ENCODE measurements at regions of chr15 and their contacts with region 1.

Region 1: DNA sequence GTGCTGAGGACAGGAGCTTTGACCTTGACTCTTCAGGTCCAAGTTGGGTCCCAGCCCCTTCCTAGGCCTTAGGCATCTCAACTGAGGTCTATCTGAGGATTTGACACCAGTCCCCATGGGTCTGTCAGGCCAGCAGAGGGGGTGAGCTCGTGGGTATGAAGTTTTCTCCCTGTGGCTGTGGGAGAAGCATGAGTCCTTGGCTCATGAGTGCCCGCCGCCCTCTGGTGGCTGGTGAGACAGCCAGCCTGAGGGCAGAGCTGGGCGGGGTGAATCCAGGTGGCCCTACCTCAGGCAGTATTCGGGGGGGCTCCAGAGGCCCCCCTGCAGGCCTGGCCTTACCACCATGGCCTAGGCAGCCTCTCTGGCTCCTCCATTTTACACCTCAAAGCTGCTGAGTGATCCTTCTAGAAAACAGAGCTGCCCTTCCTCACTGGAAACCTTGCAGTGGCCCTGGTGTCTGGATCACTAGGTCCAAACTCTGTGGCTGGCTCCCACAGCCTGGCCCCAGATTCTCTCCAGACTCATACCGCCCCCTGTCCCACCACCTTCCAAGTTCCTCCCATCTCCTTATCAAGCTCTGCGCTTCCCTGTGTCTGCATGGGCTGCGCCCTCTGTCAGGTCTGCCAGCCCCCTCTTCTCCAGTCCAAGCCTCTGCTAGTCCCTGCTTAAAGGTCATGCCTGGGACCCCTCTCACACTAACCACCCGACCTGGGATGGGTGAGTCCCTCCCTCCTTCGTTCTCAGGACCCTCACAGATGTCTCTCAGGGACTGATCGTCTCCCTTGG is 16.1 kb downstream of the SH2D7 start:
- DNase-seq: peak; percentile 78 to 94 (median 83)
- ATAC-seq: peak; percentile 86
- H3K4me3 ChIP-seq: no peak overlapping the region
- H3K4me3 Mint-ChIP-seq: no peak overlapping the region
- H3K27ac ChIP-seq: no peak overlapping the region
- H3K27ac Mint-ChIP-seq: no peak overlapping the region
- H3K4me1 ChIP-seq: peaks cover 37% of the 10 kb centered on the region
- H3K4me1 Mint-ChIP-seq: peaks cover 35% of the 10 kb centered on the region
- H3K27me3 ChIP-seq: no peaks in the 10 kb centered on the region
- H3K27me3 Mint-ChIP-seq: no peaks in the 10 kb centered on the region
- CTCF ChIP-seq: peak; percentile 88

Region 2: DNA sequence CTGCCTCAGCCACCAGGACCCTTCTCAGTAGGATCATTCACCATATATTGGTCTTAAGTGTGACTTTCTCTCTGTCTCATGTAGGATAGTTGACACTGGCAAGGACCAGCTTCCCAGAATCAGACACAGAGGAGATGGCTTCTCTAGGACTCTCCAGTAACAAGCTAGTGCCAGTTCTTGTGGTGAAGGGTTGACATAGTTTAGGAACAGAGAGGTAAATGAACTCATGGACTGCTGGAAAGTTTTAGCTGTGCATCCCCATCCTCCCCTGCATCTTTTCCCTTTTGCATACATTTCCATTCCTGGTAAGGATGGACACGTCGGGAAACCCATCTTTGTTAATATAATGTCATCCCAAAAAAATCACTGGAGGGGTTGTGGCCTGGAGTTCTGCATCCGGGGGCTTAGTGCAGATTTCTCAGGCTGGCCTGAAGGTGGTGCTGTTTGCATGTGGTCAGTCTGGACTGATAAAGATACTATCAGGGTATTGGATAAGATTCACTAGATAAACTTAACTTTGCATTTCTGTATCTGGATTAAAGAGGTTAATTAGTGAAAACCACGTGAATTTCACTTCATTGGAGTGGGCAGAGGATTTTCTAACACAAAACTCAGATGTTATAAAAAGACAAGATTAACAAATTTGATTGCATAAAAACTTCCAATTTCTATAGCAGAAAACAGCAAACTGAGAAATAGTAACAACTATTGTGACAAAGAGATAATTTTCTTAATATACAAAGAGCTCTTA is 141.8 kb before region 1 on chr15:
- CTCF ChIA-PET with region 1: interaction called, 27 read pairs
- POLR2A ChIA-PET with region 1: interaction called, 3 read pairs
- intact Hi-C with region 1: loop called (anchors 1 kb)
- DNase-seq: peak in 13 of 14 experiments; percentile 23 to 73 (median 50)
- ATAC-seq: peak; percentile 44
- H3K4me3 ChIP-seq: no peak overlapping the region
- H3K4me3 Mint-ChIP-seq: no peak overlapping the region
- H3K27ac ChIP-seq: no peak overlapping the region
- H3K27ac Mint-ChIP-seq: no peak overlapping the region
- H3K4me1 ChIP-seq: no peaks in the 10 kb centered on the region
- H3K4me1 Mint-ChIP-seq: no peaks in the 10 kb centered on the region
- H3K27me3 ChIP-seq: no peaks in the 10 kb centered on the region
- H3K27me3 Mint-ChIP-seq: no peaks in the 10 kb centered on the region
- CTCF ChIP-seq: peak; percentile 90

Region 3: GRCh38 chr15:78034495-78035191 is 73.8 kb before region 1 on chr15:
- CTCF ChIA-PET with region 1: interaction called, 15 read pairs
- POLR2A ChIA-PET with region 1: interaction called, 7 read pairs
- intact Hi-C with region 1: loop called in 1 of 2 experiments (anchors 2 kb)
- DNase-seq: peak; percentile 60 to 89 (median 76)
- ATAC-seq: peak; percentile 89
- H3K4me3 ChIP-seq: peak overlapping the region; percentile 9
- H3K4me3 Mint-ChIP-seq: peak overlapping the region; percentile 67
- H3K27ac ChIP-seq: peak overlapping the region; percentile 56 to 72
- H3K27ac Mint-ChIP-seq: peak overlapping the region; percentile 95
- H3K4me1 ChIP-seq: peaks cover 68% of the 10 kb centered on the region
- H3K4me1 Mint-ChIP-seq: peaks cover 90% of the 10 kb centered on the region
- H3K27me3 ChIP-seq: no peaks in the 10 kb centered on the region
- H3K27me3 Mint-ChIP-seq: no peaks in the 10 kb centered on the region
- CTCF ChIP-seq: no peak

Region 4: DNA sequence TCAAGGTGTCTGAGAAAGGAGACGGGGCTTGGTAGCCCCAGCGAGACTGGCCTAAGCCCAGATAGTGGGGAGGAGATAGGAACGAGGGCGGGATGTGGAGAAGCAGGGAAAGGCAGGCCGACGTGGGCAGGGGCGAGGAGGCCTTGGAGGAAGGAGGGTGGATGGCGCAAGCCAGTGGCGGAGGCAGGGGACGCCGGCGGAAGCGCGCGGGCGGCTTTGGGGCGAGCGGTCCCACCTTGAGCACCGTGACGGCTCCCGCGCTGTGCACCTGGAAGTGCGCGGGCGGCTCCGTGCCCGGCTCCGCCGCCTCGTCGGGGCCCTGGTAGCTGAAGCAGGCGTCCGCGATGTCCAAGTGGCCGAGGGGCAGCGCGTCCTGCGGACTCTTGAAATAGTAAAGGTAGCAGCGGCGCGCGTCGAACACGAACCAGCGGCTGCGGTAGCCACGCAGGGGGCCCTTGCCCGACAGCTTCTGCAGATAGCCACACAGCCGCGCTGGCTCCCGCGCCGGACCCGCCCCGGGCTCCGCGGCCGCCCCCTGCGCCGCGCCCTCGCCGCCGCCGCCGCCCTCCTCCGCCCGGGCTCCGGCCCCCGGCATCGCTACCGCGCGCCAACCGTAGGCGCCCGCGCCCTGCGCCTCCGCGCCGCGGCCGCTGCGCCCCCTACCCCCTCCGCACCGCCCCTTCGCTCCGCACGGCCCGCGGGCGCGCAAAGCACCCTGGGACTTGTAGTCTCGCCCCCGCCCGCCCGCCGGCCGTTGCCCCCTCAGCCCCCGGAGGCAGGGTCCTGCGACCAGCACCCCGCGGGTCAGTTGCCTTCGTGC is 31.2 kb before region 1 on chr15 and contains the start of gene TBC1D2B:
- CTCF ChIA-PET with region 1: interaction called, 11 read pairs
- POLR2A ChIA-PET with region 1: interaction called, 4 read pairs
- intact Hi-C with region 1: no loop called
- DNase-seq: peak; percentile 46 to 88 (median 66)
- ATAC-seq: peak; percentile 73
- H3K4me3 ChIP-seq: peak within 1 kb of the TSS; percentile 96
- H3K4me3 Mint-ChIP-seq: peak within 1 kb of the TSS; percentile 99
- H3K27ac ChIP-seq: peak within 1 kb of the TSS; percentile 68 to 75
- H3K27ac Mint-ChIP-seq: no peak within 1 kb of the TSS
- H3K4me1 ChIP-seq: peaks cover 48% of the 10 kb centered on the region
- H3K4me1 Mint-ChIP-seq: peaks cover 47% of the 10 kb centered on the region
- H3K27me3 ChIP-seq: no peaks in the 10 kb centered on the region
- H3K27me3 Mint-ChIP-seq: no peaks in the 10 kb centered on the region
- CTCF ChIP-seq: no peak
- total RNA-seq, gene TBC1D2B: 89.3 to 97.6 TPM

Region 5: DNA sequence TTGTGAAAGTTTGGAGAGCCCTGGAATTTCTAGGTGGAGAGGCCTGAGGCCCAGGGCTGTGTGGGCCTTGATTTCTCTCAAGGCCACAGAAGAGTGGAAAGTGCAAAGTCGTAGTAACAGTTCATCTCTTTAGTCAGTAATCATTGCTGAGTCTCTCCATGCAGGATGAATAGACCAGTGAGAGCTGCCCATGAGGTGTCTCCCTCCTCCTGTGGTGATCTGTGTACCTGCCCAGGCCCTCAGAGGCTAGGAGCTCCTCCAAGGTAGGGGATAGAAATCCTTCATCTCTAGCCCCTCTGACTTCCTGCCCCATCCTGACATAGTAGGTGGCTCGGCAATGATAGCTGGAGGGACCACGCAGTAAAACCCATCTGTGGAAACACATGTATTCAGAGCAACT is 33.8 kb after region 1 on chr15:
- CTCF ChIA-PET with region 1: no interaction called
- POLR2A ChIA-PET with region 1: no interaction called
- intact Hi-C with region 1: no loop called
- DNase-seq: no peak
- ATAC-seq: no peak
- H3K4me3 ChIP-seq: no peak overlapping the region
- H3K4me3 Mint-ChIP-seq: no peak overlapping the region
- H3K27ac ChIP-seq: no peak overlapping the region
- H3K27ac Mint-ChIP-seq: no peak overlapping the region
- H3K4me1 ChIP-seq: no peaks in the 10 kb centered on the region
- H3K4me1 Mint-ChIP-seq: peaks cover 2% of the 10 kb centered on the region
- H3K27me3 ChIP-seq: no peaks in the 10 kb centered on the region
- H3K27me3 Mint-ChIP-seq: no peaks in the 10 kb centered on the region
- CTCF ChIP-seq: no peak

Region 6: DNA sequence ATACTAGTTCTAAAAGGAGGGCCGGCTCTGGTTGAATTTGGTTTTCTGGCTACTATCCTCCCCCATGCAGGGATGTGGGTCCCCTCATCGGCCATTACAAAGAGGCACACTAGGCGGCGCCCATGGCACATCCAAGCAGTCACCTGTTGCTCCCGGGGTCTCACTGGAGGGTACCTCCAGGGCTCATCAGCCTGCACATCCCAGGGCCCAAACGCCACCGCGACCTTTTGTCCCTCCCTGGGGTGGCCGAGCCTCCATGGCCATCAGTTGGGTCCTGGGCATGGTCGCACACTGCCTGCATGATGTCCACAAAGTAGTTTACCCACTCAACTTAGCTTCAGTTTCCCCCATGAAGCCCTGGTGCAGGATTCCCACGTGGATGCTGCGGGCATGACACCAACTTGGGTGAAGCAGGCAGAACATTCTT is 69.0 kb after region 1 on chr15:
- CTCF ChIA-PET with region 1: no interaction called
- POLR2A ChIA-PET with region 1: no interaction called
- intact Hi-C with region 1: no loop called
- DNase-seq: peak in 8 of 14 experiments; percentile 10 to 41 (median 22)
- ATAC-seq: peak; percentile 37
- H3K4me3 ChIP-seq: no peak overlapping the region
- H3K4me3 Mint-ChIP-seq: no peak overlapping the region
- H3K27ac ChIP-seq: no peak overlapping the region
- H3K27ac Mint-ChIP-seq: no peak overlapping the region
- H3K4me1 ChIP-seq: peaks cover 16% of the 10 kb centered on the region
- H3K4me1 Mint-ChIP-seq: peaks cover 31% of the 10 kb centered on the region
- H3K27me3 ChIP-seq: no peaks in the 10 kb centered on the region
- H3K27me3 Mint-ChIP-seq: no peaks in the 10 kb centered on the region
- CTCF ChIP-seq: peak; percentile 20

Region 7: DNA sequence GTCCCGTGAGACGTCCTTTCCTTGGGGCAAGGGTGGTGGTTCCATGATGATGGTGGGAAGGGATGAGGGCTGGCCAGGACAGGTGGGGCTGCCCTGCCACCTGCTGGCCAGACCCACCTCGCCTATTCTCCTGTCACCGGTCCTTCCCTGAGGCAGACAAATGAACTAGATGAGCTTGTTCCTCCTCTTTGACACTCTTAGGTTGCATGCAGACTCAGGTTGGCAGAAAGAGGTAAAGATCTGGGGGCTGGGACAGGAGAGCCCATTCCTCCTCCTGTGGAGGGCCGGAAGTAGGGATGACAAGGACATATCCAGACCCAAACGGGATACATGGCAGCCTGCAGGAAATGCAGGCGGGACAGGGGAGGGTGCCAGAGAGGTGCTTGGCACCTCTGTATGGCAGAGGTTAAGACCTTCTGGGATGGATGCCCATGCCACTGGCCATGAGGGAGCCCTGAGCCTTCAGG is 87.3 kb after region 1 on chr15:
- CTCF ChIA-PET with region 1: interaction called, 57 read pairs
- POLR2A ChIA-PET with region 1: no interaction called
- intact Hi-C with region 1: loop called (anchors 1 kb)
- DNase-seq: peak; percentile 17 to 75 (median 39)
- ATAC-seq: peak; percentile 86
- H3K4me3 ChIP-seq: no peak overlapping the region
- H3K4me3 Mint-ChIP-seq: no peak overlapping the region
- H3K27ac ChIP-seq: no peak overlapping the region
- H3K27ac Mint-ChIP-seq: no peak overlapping the region
- H3K4me1 ChIP-seq: peaks cover 4% of the 10 kb centered on the region
- H3K4me1 Mint-ChIP-seq: no peaks in the 10 kb centered on the region
- H3K27me3 ChIP-seq: no peaks in the 10 kb centered on the region
- H3K27me3 Mint-ChIP-seq: no peaks in the 10 kb centered on the region
- CTCF ChIP-seq: peak; percentile 81

Region 8: DNA sequence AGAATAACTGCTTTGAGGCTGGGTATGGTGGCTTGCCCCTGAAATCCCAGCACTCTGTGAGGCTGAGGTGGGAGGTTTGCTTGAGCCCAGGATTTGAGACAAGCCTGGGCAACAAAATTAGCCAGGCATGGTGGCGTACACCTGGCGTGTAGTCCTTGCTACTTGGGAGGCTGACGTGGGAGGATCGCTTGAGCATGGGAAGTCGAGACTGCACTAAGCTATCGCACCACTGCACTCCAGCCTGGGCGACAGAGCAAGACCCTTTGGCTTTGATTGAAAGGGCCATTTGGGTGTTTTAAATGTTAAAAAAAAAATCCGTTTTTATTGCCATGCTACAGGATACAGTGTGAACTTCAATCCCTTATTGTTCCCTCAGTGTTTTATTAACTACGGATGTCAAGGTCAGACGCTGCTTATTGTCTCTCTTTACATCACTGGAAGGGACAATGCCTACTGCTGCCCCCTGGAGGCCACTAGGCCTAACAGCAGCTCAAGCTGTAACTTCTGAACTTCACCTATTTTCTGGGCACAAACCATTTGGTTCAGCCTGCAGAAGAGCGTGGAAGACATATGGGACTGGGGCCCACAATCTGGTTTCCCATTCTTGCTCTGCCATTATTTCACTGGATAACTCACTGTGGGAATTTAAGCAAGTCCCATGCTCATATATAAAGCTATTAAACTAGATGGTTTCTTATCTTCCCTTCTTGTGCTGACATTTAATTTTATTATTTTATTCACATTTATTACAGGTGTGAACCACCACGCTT is 314.3 kb after region 1 on chr15:
- CTCF ChIA-PET with region 1: no interaction called
- POLR2A ChIA-PET with region 1: no interaction called
- intact Hi-C with region 1: loop called (anchors 1 to 2 kb)
- DNase-seq: peak; percentile 43 to 80 (median 54)
- ATAC-seq: peak; percentile 86
- H3K4me3 ChIP-seq: no peak overlapping the region
- H3K4me3 Mint-ChIP-seq: no peak overlapping the region
- H3K27ac ChIP-seq: no peak overlapping the region
- H3K27ac Mint-ChIP-seq: no peak overlapping the region
- H3K4me1 ChIP-seq: peaks cover 7% of the 10 kb centered on the region
- H3K4me1 Mint-ChIP-seq: peaks cover 20% of the 10 kb centered on the region
- H3K27me3 ChIP-seq: peaks cover 0 to 2% of the 10 kb centered on the region in 2 experiments
- H3K27me3 Mint-ChIP-seq: peaks cover 9% of the 10 kb centered on the region
- CTCF ChIP-seq: peak; percentile 93

Region 9: GRCh38 chr15:78750566-78750965 is 642.1 kb after region 1 on chr15:
- CTCF ChIA-PET with region 1: interaction called, 3 read pairs
- POLR2A ChIA-PET with region 1: no interaction called
- intact Hi-C with region 1: loop called in 1 of 2 experiments (anchors 5 kb)
- DNase-seq: no peak
- ATAC-seq: no peak
- H3K4me3 ChIP-seq: no peak overlapping the region
- H3K4me3 Mint-ChIP-seq: peak overlapping the region; percentile 7
- H3K27ac ChIP-seq: no peak overlapping the region
- H3K27ac Mint-ChIP-seq: no peak overlapping the region
- H3K4me1 ChIP-seq: peaks cover 10% of the 10 kb centered on the region
- H3K4me1 Mint-ChIP-seq: peaks cover 9% of the 10 kb centered on the region
- H3K27me3 ChIP-seq: no peaks in the 10 kb centered on the region
- H3K27me3 Mint-ChIP-seq: no peaks in the 10 kb centered on the region
- CTCF ChIP-seq: no peak